ENCODE measurements at regions of chr14 and their contacts with region 1.

Region 1: GRCh38 chr14:105490572-105491366 is at the start of gene TEDC1:
- DNase-seq: peak; percentile 99 to 100 (median 100)
- H3K4me3 ChIP-seq: peak within 1 kb of the TSS; percentile 79
- H3K27ac ChIP-seq: peak within 1 kb of the TSS; percentile 66 to 87
- H3K4me1 ChIP-seq: peaks cover 4% of the 10 kb centered on the region
- H3K27me3 ChIP-seq: no peaks in the 10 kb centered on the region
- CTCF ChIP-seq: peak; percentile 55 to 99 (median 99)
- EP300 ChIP-seq: peak; percentile 60
- POLR2A ChIP-seq: peak; percentile 73
- total RNA-seq, gene TEDC1: 2.6 to 8.2 (median 3.8) TPM

Region 2: DNA sequence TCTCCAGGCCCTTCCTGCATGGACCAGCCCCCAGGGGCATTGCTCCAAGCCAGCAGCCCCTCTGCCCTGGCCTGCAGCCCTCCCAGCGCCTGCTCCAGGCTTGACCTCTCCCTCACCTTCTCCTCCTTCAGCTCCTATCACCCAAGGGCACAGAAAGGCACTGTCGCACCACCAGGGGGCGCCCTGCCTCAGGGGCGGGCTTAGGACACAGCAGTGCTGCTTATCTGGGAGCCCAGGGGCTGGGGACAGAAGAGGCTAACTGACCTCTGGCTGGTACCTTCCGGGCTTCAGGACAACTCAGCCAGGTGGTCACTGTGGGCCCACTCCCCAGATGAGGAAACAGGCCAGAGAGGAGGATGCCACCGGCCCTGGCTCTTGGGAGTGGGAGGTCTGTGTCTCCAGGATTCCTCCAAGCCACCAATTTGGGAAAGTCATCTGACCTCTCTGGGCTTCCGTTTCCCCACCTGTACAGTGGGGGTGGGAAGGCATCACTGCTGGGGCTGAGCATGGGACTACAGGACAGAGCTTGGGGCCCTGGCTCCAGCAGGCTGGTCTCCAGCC is 400.2 kb before region 1 on chr14:
- intact Hi-C with region 1: loop called in 1 of 4 experiments (anchors 10 kb)
- DNase-seq: peak; percentile 55 to 83 (median 74)
- H3K4me3 ChIP-seq: no peak overlapping the region
- H3K27ac ChIP-seq: no peak overlapping the region
- H3K4me1 ChIP-seq: peaks cover 15% of the 10 kb centered on the region
- H3K27me3 ChIP-seq: no peaks in the 10 kb centered on the region
- CTCF ChIP-seq: peak; percentile 31 to 68 (median 48)
- EP300 ChIP-seq: no peak
- POLR2A ChIP-seq: no peak

Region 3: GRCh38 chr14:105300792-105301533 is 189.8 kb before region 1 on chr14 and contains the start of gene BRF1:
- intact Hi-C with region 1: loop called in 1 of 4 experiments (anchors 5 kb)
- DNase-seq: peak; percentile 99 to 100 (median 99)
- H3K4me3 ChIP-seq: peak within 1 kb of the TSS; percentile 62
- H3K27ac ChIP-seq: peak within 1 kb of the TSS; percentile 63 to 94
- H3K4me1 ChIP-seq: peaks cover 2% of the 10 kb centered on the region
- H3K27me3 ChIP-seq: no peaks in the 10 kb centered on the region
- CTCF ChIP-seq: peak in 1 of 3 donors; percentile 32
- EP300 ChIP-seq: no peak
- POLR2A ChIP-seq: peak; percentile 57
- total RNA-seq, gene BRF1: 33.3 to 47.3 (median 38.5) TPM

Region 4: DNA sequence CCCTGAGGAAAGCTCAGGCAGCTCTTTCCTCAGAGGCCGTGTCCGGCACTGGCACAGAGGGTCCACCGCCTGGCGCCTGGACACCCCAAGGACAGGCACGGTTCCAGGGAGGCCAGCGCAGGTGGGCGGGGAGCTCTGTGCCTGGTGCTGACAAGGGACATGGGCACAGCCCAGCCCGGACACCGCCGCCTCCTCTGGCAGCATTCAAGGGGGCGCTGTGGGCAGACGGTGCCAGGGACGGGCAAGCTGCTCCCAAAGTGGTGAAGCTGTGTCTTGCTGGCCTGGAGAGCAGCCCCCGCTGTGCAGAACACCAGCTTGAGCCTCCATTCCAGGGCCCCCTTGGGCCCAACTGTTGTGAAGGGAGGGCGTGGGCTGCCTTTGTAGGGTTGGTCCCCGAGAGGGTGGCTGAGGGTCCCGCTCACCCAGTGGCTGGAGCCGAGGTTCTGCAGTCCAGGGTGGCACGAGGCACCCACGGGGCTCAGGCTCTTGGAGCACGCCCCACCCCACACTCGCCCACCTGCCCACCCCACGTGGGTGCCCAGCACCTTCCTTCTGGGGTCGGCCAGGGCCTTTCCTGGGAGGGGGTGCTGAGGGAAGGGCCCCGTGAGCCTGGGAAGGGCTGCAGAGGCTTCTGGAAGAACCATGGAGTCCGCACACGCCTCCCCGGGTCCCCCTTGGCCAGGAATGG is 121.7 kb before region 1 on chr14:
- intact Hi-C with region 1: loop called in 3 of 4 experiments (anchors 2 to 5 kb)
- DNase-seq: no peak
- H3K4me3 ChIP-seq: no peak overlapping the region
- H3K27ac ChIP-seq: no peak overlapping the region
- H3K4me1 ChIP-seq: peaks cover 2% of the 10 kb centered on the region
- H3K27me3 ChIP-seq: no peaks in the 10 kb centered on the region
- CTCF ChIP-seq: no peak
- EP300 ChIP-seq: no peak
- POLR2A ChIP-seq: no peak

Region 5: GRCh38 chr14:105375635-105376057 is 115.1 kb before region 1 on chr14:
- intact Hi-C with region 1: loop called in 3 of 4 experiments (anchors 5 kb)
- DNase-seq: no peak
- H3K4me3 ChIP-seq: no peak overlapping the region
- H3K27ac ChIP-seq: no peak overlapping the region
- H3K4me1 ChIP-seq: no peaks in the 10 kb centered on the region
- H3K27me3 ChIP-seq: no peaks in the 10 kb centered on the region
- CTCF ChIP-seq: no peak
- EP300 ChIP-seq: no peak
- POLR2A ChIP-seq: no peak

Region 6: DNA sequence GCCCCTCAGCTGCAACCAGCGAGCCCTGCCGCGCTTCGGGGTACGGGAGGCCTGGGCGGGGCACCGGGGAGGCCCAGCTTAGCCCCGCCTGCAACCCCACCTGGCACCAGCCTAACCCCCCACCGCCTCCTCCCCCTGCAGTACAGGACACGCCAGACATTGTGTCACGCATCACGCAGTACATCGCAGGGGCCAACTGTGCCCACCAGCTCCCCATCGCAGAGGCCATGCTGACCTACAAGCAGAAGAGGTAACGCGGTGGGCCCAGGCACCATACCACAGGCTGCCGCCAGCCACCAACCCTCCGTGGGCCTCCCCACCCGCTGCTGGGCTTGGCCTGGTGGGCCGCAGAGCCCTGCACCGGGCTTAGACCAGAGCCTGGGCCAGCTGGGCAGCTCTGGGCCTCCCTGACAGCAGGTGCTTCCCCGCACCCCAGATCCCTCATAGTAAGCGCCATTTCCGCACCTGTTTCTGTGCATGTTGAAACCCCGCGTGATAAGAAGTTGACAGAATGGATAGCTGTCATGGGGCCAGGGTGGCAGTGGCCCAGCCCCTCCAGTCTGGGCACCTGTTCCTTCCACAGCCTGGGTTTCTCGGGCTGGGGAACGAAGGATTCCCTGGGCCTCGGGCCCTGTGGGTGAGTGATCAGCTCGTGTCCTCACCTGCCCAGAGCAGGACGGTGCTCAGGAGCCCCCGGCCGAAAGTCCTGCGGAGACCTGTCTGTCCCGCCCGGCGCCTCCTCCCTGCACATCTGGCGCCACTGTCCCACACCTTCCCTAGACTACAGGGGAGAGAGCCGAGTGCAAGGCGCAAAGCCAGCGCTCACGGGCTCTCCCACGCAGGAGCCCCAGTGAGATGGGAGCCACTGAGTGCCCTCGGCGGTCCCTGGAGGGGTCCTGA is 105.8 kb before region 1 on chr14:
- intact Hi-C with region 1: loop called in 1 of 4 experiments (anchors 5 kb)
- DNase-seq: peak in 1 of 5 donors; percentile 17
- H3K4me3 ChIP-seq: no peak overlapping the region
- H3K27ac ChIP-seq: no peak overlapping the region
- H3K4me1 ChIP-seq: no peaks in the 10 kb centered on the region
- H3K27me3 ChIP-seq: no peaks in the 10 kb centered on the region
- CTCF ChIP-seq: no peak
- EP300 ChIP-seq: no peak
- POLR2A ChIP-seq: no peak

Region 7: GRCh38 chr14:105527661-105528581 is 37.2 kb after region 1 on chr14:
- intact Hi-C with region 1: loop called in 1 of 4 experiments (anchors 5 kb)
- DNase-seq: peak; percentile 71 to 89 (median 80)
- H3K4me3 ChIP-seq: peak overlapping the region; percentile 60
- H3K27ac ChIP-seq: peak overlapping the region in 1 of 2 donors; percentile 53
- H3K4me1 ChIP-seq: peaks cover 10% of the 10 kb centered on the region
- H3K27me3 ChIP-seq: no peaks in the 10 kb centered on the region
- CTCF ChIP-seq: peak; percentile 76 to 86 (median 85)
- EP300 ChIP-seq: no peak
- POLR2A ChIP-seq: no peak

Region 8: DNA sequence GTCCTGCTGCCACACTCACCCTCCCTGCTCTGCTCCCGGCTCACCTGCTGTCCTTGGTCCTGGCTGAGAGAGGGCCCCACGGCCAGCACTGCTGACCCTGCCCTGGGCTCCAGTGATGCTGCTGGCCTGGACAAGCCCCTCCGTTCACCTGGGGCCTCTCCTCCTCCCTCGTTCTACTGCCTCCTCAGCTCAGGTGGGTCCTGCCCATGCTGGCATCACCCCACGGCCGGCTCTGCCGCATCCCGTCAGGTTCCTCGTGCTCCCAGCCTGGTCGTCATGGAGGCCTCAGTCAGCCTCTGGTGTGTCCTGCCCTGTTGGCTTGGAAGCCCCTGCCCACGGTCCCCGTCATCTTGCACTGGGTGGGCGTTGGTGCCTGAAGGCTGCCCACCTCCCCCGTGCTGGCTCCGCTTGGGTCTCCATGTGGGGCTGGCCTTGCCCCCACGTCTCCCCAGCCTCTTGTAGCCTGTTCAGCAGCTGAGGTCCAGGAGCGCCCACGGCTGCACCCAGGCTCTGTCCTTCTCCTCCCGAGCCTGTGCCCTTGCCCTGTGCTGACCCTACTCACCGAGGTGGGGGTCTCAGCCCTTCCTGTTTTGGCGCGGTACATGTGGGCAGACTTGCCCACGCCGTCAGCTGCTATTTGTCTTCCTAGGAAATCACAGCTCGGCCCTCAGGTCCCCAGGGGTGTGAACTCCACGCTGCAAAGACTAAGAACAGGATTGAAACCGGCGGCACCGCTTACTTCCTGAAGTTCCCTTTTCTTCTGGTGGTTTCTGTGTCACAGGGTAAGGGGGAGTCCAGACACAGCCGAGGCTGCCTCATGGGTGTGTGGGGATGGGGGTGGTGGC is 157.2 kb after region 1 on chr14:
- intact Hi-C with region 1: no loop called
- DNase-seq: no peak
- H3K4me3 ChIP-seq: no peak overlapping the region
- H3K27ac ChIP-seq: no peak overlapping the region
- H3K4me1 ChIP-seq: no peaks in the 10 kb centered on the region
- H3K27me3 ChIP-seq: no peaks in the 10 kb centered on the region
- CTCF ChIP-seq: no peak
- EP300 ChIP-seq: no peak
- POLR2A ChIP-seq: no peak